SK-N-SH (cell line): ENCODE measurements at regions of chr20 and their contacts with region 1.

Region 1: DNA sequence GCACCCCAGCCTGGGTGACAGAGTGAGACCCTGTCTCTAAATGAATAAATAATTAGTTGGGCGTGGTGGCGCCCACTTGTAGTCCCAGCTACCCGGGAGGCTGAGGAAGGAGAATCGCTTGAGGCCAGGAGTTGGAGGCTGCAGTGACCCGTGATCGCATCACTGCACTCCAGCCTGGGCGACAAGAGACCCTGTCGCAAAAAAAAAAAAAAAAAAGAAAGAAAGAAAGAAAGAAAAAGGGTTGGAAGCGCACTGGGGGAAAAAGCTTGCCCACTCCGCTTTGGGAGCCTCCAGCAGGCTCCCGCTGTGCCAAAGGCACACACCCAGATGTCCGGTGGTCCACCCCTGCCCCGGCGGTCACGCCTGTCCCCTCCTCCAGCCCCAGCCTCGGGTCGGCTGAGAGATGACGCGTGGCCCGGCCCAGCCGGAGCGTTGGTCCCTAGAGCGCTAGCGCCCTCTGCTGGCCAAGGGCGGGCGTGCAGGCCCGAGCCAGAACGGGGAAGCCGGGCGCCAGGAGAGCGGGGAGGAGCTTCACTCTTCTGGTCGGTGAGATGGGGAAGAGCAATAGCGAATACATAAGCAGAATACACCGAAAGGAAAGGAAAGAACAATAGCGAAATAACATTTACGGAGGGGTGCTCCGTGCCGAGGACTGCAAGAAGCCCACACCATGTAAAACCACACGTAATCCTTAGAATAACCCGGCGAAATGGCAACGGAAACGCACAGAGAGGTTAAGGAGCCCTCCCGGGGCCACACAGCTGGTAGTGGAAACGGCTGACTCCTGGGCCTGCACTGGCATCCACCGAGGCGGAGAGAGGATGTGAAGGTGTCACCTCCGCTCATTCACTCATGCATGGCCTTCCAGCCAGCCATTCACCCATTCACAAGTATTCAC is 41.7 kb downstream of the UBE2V1 start:
- DNase-seq: peak; percentile 96
- H3K4me3 ChIP-seq: peak overlapping the region; percentile 37 to 70
- H3K27ac ChIP-seq: 0 out of 4 replicates have a peak overlapping the region, but pooled peaks of 1 of the 2 experiments have one; percentile 3
- H3K4me1 ChIP-seq: peaks cover 0 to 5% of the 10 kb centered on the region in 2 experiments; a peak in 1 of 4 replicates
- H3K27me3 ChIP-seq: no peaks in the 10 kb centered on the region
- CTCF ChIP-seq: peak; percentile 99
- EP300 ChIP-seq: no peak
- RAD21 ChIP-seq: peak; percentile 99

Region 2: GRCh38 chr20:49964964-49965780 is 106.1 kb before region 1 on chr20:
- CTCF ChIA-PET with region 1: interaction called, 807 read pairs
- POLR2A ChIA-PET with region 1: no interaction called
- DNase-seq: peak; percentile 78
- H3K4me3 ChIP-seq: no peak overlapping the region; a peak in 1 of 4 replicates
- H3K27ac ChIP-seq: no peak overlapping the region
- H3K4me1 ChIP-seq: peaks cover 0 to 2% of the 10 kb centered on the region in 2 experiments; a peak in 1 of 4 replicates
- H3K27me3 ChIP-seq: no peaks in the 10 kb centered on the region
- CTCF ChIP-seq: peak; percentile 72
- EP300 ChIP-seq: no peak
- RAD21 ChIP-seq: peak; percentile 29; the same call in 1 of the 2 replicates

Region 3: GRCh38 chr20:50020288-50020687 is 51.0 kb before region 1 on chr20:
- CTCF ChIA-PET with region 1: interaction called, 38 read pairs
- POLR2A ChIA-PET with region 1: no interaction called
- DNase-seq: no peak
- H3K4me3 ChIP-seq: no peak overlapping the region
- H3K27ac ChIP-seq: no peak overlapping the region; a peak in 1 of 4 replicates
- H3K4me1 ChIP-seq: peaks cover 0 to 21% of the 10 kb centered on the region in 2 experiments; a peak in 1 of 4 replicates
- H3K27me3 ChIP-seq: no peaks in the 10 kb centered on the region
- CTCF ChIP-seq: no peak
- EP300 ChIP-seq: no peak
- RAD21 ChIP-seq: no peak

Region 4: GRCh38 chr20:50085452-50086365 is 14.5 kb after region 1 on chr20:
- CTCF ChIA-PET with region 1: interaction called, 76 read pairs
- POLR2A ChIA-PET with region 1: interaction called, 4 read pairs
- DNase-seq: peak; percentile 79
- H3K4me3 ChIP-seq: no peak overlapping the region; a peak in 1 of 4 replicates
- H3K27ac ChIP-seq: peak overlapping the region; percentile 50 to 73
- H3K4me1 ChIP-seq: peaks cover 15 to 21% of the 10 kb centered on the region in 2 experiments
- H3K27me3 ChIP-seq: no peaks in the 10 kb centered on the region
- CTCF ChIP-seq: peak; percentile 88
- EP300 ChIP-seq: no peak
- RAD21 ChIP-seq: peak; percentile 80

Region 5: DNA sequence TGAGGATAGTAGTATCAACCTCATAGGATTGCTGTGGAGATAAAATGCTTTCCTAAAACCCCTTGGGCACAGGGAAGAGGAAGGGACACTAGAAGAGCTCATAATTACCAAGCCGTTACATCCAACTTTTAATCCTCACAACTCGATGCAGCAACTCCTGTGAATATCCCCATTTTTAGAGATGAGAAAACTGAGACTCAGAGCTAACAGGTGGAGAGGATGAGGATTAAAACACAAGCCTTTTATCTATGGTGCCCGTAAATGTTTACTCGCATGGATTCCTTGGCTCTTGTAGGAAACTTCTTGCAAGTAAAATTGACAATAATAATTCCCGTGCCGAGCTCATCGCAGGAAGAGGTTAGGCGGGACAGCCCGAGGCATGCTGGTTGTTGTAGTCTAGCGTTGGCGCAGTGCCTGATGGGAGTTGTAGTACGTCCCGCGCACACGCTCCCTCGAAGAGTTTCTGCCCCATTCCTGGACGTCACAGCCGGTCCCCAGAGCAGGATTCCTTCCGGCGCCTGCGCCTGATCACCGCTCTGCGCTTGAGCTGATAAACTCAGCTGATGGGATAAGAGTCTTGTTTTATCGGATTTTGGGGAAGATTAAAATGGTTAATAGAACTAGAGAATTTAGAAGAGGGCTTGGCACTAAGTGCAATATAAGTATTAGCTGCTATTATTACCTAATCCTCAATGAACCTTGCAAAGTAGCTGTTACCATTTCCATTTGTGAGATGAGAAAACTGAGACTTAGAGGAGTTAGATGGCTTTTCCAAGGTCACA is 44.5 kb after region 1 on chr20:
- CTCF ChIA-PET with region 1: interaction called, 29 read pairs
- POLR2A ChIA-PET with region 1: no interaction called
- DNase-seq: peak; percentile 89
- H3K4me3 ChIP-seq: peak overlapping the region; percentile 64 to 70
- H3K27ac ChIP-seq: peak overlapping the region; percentile 52 to 85; a peak in 3 of 4 replicates
- H3K4me1 ChIP-seq: peaks cover 15 to 37% of the 10 kb centered on the region in 2 experiments; a peak in 3 of 4 replicates
- H3K27me3 ChIP-seq: no peaks in the 10 kb centered on the region
- CTCF ChIP-seq: no peak
- EP300 ChIP-seq: no peak
- RAD21 ChIP-seq: no peak